WTC11 (cell line): ENCODE measurements at regions of chr19 and their contacts with region 1.

Region 1: DNA sequence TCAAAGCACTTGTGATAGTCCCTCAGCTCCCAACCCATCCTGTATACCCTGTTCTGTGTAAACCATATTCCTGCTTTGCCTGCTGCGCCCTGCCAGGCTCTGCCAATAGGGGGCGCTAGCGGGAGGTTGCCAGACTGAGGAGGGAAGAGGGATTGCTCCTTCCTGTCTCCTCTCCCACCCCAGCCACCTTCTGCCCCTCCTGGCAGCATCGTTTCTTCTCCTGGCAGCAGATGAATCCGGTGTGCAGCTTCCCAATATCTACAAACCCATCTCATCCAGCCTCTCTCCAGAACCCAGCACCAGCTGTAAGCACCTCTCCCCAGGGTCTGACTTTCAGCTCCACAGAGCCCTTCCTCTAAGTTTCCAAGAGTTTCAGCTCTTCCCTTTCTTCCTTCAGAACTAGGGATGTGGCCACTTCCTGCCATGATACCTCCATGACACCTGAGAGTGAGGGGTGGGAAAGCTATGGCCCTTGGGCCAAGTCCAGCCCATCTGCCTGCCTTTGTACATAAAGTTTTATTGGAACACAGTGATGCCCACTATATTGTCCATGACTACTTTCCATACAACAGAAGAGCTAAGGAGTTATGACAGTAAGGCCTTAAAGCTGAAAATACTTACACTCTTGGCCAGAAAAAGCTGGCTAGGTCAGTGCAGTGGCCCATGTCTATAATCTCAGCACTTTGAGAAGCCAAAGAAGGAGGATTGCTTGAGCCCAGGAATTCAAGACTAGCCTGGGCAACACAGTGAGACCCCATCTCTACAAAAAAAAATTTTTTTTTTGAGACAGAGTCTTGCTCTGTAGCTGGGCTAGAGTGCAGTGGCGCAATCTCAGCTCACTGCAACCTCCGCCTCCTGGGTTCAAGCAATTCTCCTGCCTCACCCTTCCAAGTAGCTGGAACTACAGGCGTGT is 34.5 kb upstream of the ATP1A3 start:
- DNase-seq: peak; percentile 93
- ATAC-seq: peak; percentile 79
- H3K4me3 Mint-ChIP-seq: peak overlapping the region; percentile 62
- H3K27ac Mint-ChIP-seq: peak overlapping the region; percentile 17
- H3K4me1 Mint-ChIP-seq: peaks cover 39% of the 10 kb centered on the region
- H3K27me3 Mint-ChIP-seq: no peaks in the 10 kb centered on the region
- CTCF ChIP-seq: peak; percentile 98

Region 2: GRCh38 chr19:41951686-41952172 is 76.8 kb before region 1 on chr19:
- CTCF ChIA-PET with region 1: no interaction called
- POLR2A ChIA-PET with region 1: no interaction called
- DNase-seq: peak; percentile 97
- ATAC-seq: peak; percentile 93
- H3K4me3 Mint-ChIP-seq: peak overlapping the region; percentile 65
- H3K27ac Mint-ChIP-seq: no peak overlapping the region
- H3K4me1 Mint-ChIP-seq: no peaks in the 10 kb centered on the region
- H3K27me3 Mint-ChIP-seq: peaks cover 15% of the 10 kb centered on the region
- CTCF ChIP-seq: peak; percentile 100

Region 3: DNA sequence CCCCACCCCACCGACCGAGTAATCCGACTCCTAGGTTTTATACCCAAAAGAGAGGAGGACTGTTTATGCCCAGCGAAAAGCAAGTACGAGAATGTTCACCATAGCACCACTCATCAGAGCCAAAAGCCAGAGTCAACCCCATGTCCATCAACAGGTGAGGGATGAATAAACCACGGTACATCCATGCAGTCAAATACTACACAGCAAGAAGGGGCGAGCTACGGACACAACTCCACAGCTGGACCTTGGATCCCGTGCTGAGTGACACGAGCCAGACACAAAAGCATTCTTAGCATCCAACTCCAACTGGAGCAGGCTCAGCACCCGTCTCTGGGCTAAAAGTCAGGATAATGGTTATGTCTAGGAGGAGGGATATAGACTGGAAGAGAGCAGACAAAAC is 57.2 kb before region 1 on chr19:
- CTCF ChIA-PET with region 1: no interaction called
- POLR2A ChIA-PET with region 1: no interaction called
- DNase-seq: no peak
- ATAC-seq: no peak
- H3K4me3 Mint-ChIP-seq: no peak overlapping the region
- H3K27ac Mint-ChIP-seq: no peak overlapping the region
- H3K4me1 Mint-ChIP-seq: no peaks in the 10 kb centered on the region
- H3K27me3 Mint-ChIP-seq: no peaks in the 10 kb centered on the region
- CTCF ChIP-seq: no peak

Region 4: DNA sequence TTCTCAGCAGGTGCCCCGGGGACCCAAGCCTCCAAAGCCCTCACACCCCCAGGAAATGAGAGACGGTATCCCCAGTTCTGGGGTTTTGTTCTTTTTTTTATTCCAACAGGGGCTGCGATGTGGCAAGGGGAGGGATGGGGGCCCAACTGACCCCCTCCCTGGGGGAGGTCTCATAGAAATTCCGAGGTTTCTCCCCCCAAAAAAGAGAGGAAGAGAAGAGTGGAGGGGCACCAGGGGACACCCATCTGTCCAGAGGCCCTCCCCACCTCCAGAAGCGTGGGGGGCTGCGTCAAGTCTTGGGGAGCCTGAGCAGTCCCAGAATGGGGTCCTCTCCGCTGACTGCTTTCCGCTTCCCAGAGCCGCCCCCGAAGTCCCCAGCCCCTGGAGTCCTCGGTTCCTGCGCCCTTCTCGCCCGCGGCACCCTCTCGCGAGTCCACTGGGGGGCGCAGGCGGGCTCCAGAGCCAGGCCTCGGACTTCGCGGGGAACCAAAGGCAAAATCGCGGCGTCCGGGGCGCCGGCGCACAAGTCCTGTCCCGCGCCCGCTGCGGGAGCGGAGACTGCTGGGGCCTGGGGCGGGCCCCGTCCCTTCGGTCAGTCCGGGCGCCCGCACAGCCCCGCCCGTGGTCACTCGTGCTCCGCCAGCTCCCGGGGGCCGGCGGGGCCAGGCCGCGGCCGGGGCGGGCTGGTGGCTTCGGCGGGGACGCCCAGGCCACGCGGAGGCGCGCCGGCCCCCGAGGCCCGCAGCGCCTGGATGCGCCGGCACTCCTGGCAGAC is 30.1 kb before region 1 on chr19:
- CTCF ChIA-PET with region 1: interaction called, 32 read pairs
- POLR2A ChIA-PET with region 1: no interaction called
- DNase-seq: peak; percentile 80
- ATAC-seq: peak; percentile 30
- H3K4me3 Mint-ChIP-seq: peak overlapping the region; percentile 72
- H3K27ac Mint-ChIP-seq: no peak overlapping the region
- H3K4me1 Mint-ChIP-seq: peaks cover 23% of the 10 kb centered on the region
- H3K27me3 Mint-ChIP-seq: peaks cover 69% of the 10 kb centered on the region
- CTCF ChIP-seq: peak; percentile 68

Region 5: DNA sequence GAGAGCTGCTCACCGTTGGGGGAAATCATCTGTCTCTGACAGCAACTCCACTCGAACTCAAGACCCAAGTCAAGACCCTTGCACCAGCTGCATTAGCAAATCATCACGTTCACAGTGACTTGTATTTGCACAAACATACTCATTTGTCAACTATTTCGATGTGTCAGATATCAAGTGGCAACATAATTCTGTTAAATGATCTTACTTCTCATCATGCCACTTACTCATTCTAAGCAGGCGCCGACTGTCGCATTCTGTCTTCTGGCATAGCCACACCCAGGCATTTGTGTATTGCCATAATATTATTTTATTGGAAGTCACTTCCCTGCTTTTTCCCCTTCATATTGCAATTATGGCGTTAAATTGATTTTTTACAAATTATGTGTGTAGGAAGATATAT is 11.5 kb before region 1 on chr19:
- CTCF ChIA-PET with region 1: interaction called, 17 read pairs
- POLR2A ChIA-PET with region 1: no interaction called
- DNase-seq: no peak
- ATAC-seq: no peak
- H3K4me3 Mint-ChIP-seq: no peak overlapping the region
- H3K27ac Mint-ChIP-seq: no peak overlapping the region
- H3K4me1 Mint-ChIP-seq: no peaks in the 10 kb centered on the region
- H3K27me3 Mint-ChIP-seq: no peaks in the 10 kb centered on the region
- CTCF ChIP-seq: no peak

Region 6: DNA sequence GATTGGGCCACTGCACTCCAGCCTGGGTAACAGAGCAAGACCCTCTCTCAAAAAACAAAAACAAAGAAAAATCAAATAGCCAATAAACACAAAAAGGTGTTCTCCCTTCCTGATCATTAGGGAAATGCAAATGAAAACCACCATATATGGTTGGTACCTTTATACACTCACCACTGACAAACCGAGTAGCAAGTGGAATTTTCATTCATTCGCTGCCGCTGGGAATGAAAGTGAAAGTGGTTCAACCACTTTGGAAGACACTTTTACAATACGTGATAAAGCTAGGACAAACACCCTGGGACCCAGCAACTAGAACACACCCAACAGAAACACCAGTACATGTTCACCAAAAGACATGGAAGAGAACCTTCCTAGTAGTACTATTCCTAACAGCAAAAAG is 20.4 kb after region 1 on chr19:
- CTCF ChIA-PET with region 1: interaction called, 12 read pairs
- POLR2A ChIA-PET with region 1: interaction called, 5 read pairs
- DNase-seq: no peak
- ATAC-seq: no peak
- H3K4me3 Mint-ChIP-seq: no peak overlapping the region
- H3K27ac Mint-ChIP-seq: no peak overlapping the region
- H3K4me1 Mint-ChIP-seq: no peaks in the 10 kb centered on the region
- H3K27me3 Mint-ChIP-seq: no peaks in the 10 kb centered on the region
- CTCF ChIP-seq: no peak